ENCODE measurements at regions of chr10 and their contacts with region 1.

Region 1: DNA sequence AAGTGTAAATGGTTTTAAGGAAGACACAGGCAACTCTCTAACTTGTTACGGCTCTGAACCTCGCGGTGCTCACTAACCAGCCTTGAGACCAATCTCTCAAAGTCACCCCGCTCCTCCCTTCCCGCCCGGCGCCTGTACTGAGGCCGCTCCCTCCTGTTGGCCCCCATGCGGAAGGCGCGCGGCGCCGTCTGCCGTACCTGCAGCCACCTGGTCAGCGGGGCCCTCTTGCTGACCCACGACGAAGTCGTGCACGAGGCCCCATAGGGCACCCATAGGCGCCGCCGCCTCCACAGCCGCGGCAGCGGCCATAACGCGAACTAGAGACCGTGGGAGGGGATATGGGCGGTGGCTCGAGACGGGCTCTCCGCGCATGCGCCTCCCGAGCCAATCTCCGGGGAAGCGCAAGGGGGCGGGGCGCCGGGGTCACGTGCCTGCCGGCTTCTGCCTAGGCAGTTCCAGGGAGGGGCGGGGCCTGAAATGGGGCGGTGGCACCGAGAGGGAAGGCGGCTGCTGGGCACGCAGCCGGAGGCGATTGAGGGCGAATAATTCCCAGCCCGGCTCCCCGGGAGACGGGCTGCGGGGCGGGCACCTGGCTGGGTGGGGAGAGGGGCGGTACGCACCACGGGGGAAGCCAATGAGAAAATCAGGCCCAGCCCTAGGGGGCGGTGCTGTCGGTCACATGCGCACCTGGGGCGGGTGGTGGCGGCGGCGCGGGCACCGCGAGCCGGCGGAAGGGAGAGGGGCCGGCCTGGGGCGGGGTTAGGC is at the start of gene MMS19:
- DNase-seq: peak; percentile 99 to 100 (median 100)
- ATAC-seq: peak; percentile 89
- H3K4me3 ChIP-seq: peak within 1 kb of the TSS; percentile 96
- H3K4me3 Mint-ChIP-seq: peak within 1 kb of the TSS; percentile 85 to 99 (median 98)
- H3K27ac ChIP-seq: peak within 1 kb of the TSS; percentile 81
- H3K27ac Mint-ChIP-seq: peak within 1 kb of the TSS; percentile 94 to 98 (median 97)
- H3K4me1 ChIP-seq: peaks cover 20 to 41% of the 10 kb centered on the region in 2 donors
- H3K4me1 Mint-ChIP-seq: peaks cover 28 to 65% (median 49%) of the 10 kb centered on the region in 7 donors
- H3K27me3 ChIP-seq: no peaks in the 10 kb centered on the region
- H3K27me3 Mint-ChIP-seq: peaks cover 0 to 34% (median 21%) of the 10 kb centered on the region in 5 donors
- total RNA-seq, gene MMS19: 68.7 to 113 (median 87.9) TPM

Region 2: GRCh38 chr10:95792874-95793285 is 1705.4 kb before region 1 on chr10:
- CTCF ChIA-PET with region 1: no interaction called
- POLR2A ChIA-PET with region 1: no interaction called
- intact Hi-C with region 1: no loop called
- DNase-seq: no peak
- ATAC-seq: peak; percentile 27
- H3K4me3 ChIP-seq: no peak overlapping the region
- H3K4me3 Mint-ChIP-seq: no peak overlapping the region
- H3K27ac ChIP-seq: no peak overlapping the region
- H3K27ac Mint-ChIP-seq: peak overlapping the region in 1 of 9 donors; percentile 84
- H3K4me1 ChIP-seq: no peaks in the 10 kb centered on the region
- H3K4me1 Mint-ChIP-seq: peaks cover 0 to 67% (median 0%) of the 10 kb centered on the region in 7 donors
- H3K27me3 ChIP-seq: no peaks in the 10 kb centered on the region
- H3K27me3 Mint-ChIP-seq: peaks cover 0 to 12% (median 4%) of the 10 kb centered on the region in 5 donors

Region 3: GRCh38 chr10:97334370-97335175 is 163.7 kb before region 1 on chr10 and contains the start of gene FRAT2:
- CTCF ChIA-PET with region 1: no interaction called
- POLR2A ChIA-PET with region 1: no interaction called
- intact Hi-C with region 1: loop called (anchors 1 to 2 kb)
- DNase-seq: peak; percentile 85 to 96 (median 92)
- ATAC-seq: peak; percentile 94
- H3K4me3 ChIP-seq: peak within 1 kb of the TSS; percentile 78
- H3K4me3 Mint-ChIP-seq: peak within 1 kb of the TSS; percentile 88 to 98 (median 94)
- H3K27ac ChIP-seq: peak within 1 kb of the TSS; percentile 97
- H3K27ac Mint-ChIP-seq: peak within 1 kb of the TSS; percentile 89 to 97 (median 93)
- H3K4me1 ChIP-seq: peaks cover 20 to 24% of the 10 kb centered on the region in 2 donors
- H3K4me1 Mint-ChIP-seq: peaks cover 28 to 48% (median 42%) of the 10 kb centered on the region in 7 donors
- H3K27me3 ChIP-seq: no peaks in the 10 kb centered on the region
- H3K27me3 Mint-ChIP-seq: peaks cover 0 to 36% (median 0%) of the 10 kb centered on the region in 5 donors
- total RNA-seq, gene FRAT2: 9.3 to 39.7 (median 29.8) TPM

Region 4: DNA sequence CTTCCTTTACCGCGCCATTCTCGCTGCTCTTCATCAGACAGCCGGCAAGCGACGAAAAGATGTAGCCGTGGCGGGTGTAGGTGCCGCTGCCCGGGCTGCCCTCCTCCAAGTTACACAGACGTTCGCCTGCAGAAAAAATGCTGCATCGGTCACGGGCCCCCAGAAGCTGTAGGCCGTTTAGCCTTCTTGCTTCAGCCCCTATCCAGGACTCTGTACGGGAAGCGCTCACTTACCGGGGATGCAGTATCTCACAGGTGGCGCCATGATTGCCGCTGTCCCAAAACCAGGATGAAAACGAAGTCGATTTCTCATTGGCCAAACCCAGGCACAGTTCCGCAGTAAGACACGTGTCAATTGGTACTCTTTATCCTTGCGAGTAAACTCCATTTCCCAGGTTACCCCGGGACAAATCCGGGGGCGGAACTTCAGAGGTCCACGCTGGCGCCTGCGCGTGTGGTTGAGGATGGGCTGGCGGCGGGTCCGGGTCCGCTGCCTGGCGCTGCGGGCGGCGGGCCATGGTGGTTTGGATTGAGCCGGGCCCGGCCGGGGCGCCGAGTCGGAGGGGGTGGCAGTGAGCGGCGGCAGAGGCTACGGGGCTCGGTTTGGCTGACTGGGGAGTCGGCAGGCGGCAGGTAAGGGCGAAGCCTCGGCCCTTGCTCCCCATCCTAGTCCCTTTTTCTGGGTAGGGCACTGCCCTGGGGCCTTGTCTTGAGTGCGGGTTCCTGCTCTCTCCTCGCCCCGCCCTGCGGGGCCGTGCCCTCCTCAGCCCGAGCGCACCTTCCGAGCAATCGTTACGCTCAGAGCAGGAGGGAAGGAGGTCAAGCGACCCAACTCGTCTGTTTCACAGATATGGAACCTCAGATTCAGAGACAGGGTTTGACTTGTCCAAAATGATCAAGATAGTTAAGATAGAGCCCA is 52.3 kb before region 1 on chr10 and contains the starts of genes EXOSC1 and ZDHHC16:
- CTCF ChIA-PET with region 1: no interaction called
- POLR2A ChIA-PET with region 1: interaction called, 3 read pairs
- intact Hi-C with region 1: loop called (anchors 1 kb)
- DNase-seq: peak; percentile 67 to 93 (median 89)
- ATAC-seq: peak; percentile 99
- H3K4me3 ChIP-seq: peak within 1 kb of the TSS; percentile 98
- H3K4me3 Mint-ChIP-seq: peak within 1 kb of the TSS; percentile 89 to 99 (median 98)
- H3K27ac ChIP-seq: peak within 1 kb of the TSS; percentile 80
- H3K27ac Mint-ChIP-seq: peak within 1 kb of the TSS; percentile 86 to 97 (median 93)
- H3K4me1 ChIP-seq: peaks cover 19 to 29% of the 10 kb centered on the region in 2 donors
- H3K4me1 Mint-ChIP-seq: peaks cover 32 to 69% (median 44%) of the 10 kb centered on the region in 7 donors
- H3K27me3 ChIP-seq: no peaks in the 10 kb centered on the region
- H3K27me3 Mint-ChIP-seq: no peaks in the 10 kb centered on the region
- total RNA-seq, gene EXOSC1: 32.6 to 65.4 (median 53.2) TPM
- total RNA-seq, gene ZDHHC16: 13.2 to 38.8 (median 26.8) TPM

Region 5: GRCh38 chr10:97553575-97554031 is 55.3 kb after region 1 on chr10:
- CTCF ChIA-PET with region 1: interaction called, 6 read pairs
- POLR2A ChIA-PET with region 1: no interaction called
- intact Hi-C with region 1: loop called (anchors 1 to 5 kb)
- DNase-seq: peak in 7 of 9 donors; percentile 27 to 60 (median 52)
- ATAC-seq: peak; percentile 64
- H3K4me3 ChIP-seq: no peak overlapping the region
- H3K4me3 Mint-ChIP-seq: no peak overlapping the region
- H3K27ac ChIP-seq: no peak overlapping the region
- H3K27ac Mint-ChIP-seq: no peak overlapping the region
- H3K4me1 ChIP-seq: no peaks in the 10 kb centered on the region
- H3K4me1 Mint-ChIP-seq: peaks cover 0 to 2% (median 0%) of the 10 kb centered on the region in 7 donors
- H3K27me3 ChIP-seq: no peaks in the 10 kb centered on the region
- H3K27me3 Mint-ChIP-seq: no peaks in the 10 kb centered on the region

Region 6: DNA sequence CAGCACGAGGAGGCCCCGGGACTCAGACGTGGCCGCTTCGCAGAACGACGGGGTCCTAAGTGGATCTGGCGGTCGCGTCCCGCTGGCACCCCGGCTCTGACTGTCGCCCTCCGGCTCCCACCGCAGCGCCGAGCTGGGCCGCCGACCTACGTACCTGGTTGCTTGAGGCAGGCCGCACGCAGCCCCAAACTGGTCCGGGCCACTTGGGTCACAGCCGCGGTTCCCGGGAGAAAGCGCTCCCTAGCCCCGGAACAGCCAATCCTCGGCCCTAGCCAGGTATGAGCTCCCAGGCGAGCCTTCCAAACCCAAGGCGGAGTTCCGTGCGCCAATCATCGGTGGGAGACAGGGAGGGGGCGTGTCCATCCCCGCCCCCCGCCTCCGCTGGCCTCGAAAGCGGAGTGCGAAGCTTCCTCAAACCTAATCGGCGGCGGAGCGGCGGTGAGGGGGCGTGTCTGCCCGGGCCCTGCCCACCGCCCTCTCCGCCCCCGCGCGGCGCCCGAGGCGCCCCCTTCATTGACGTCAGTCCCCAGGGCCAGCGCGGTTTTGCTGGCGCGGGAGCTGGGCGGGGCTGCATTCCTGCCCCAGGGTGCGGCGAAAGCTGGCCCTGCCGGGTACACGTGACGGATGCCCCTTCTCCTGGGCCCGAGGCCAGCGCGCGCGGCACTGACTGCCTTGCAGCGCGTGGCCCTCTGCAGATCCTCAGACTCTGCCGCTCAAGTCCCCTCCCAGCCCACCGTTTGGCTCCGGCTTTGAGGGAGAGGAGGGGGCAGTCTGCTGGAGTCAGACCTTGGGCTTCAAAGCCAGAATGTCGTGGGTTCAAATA is 188.9 kb after region 1 on chr10 and contains the start of gene AVPI1:
- CTCF ChIA-PET with region 1: no interaction called
- POLR2A ChIA-PET with region 1: no interaction called
- intact Hi-C with region 1: loop called (anchors 1 kb)
- DNase-seq: peak; percentile 94 to 97 (median 96)
- ATAC-seq: peak; percentile 97
- H3K4me3 ChIP-seq: peak within 1 kb of the TSS; percentile 80
- H3K4me3 Mint-ChIP-seq: peak within 1 kb of the TSS; percentile 85 to 90 (median 88)
- H3K27ac ChIP-seq: peak within 1 kb of the TSS; percentile 81
- H3K27ac Mint-ChIP-seq: peak within 1 kb of the TSS; percentile 28 to 96 (median 91)
- H3K4me1 ChIP-seq: peaks cover 5 to 25% of the 10 kb centered on the region in 2 donors
- H3K4me1 Mint-ChIP-seq: peaks cover 9 to 30% (median 19%) of the 10 kb centered on the region in 7 donors
- H3K27me3 ChIP-seq: no peaks in the 10 kb centered on the region
- H3K27me3 Mint-ChIP-seq: peaks cover 0 to 2% (median 0%) of the 10 kb centered on the region in 5 donors
- total RNA-seq, gene AVPI1: 0.65 to 10.6 (median 2.5) TPM